Activated CD4-positive, alpha-beta memory T cell treated with anti-CD3 and anti-CD28 coated beads for 36 hours (primary cell): ENCODE measurements at regions of chr14 and their contacts with region 1.

Region 1: GRCh38 chr14:34161351-34162082 is 210.6 kb upstream of the EGLN3 start:
- DNase-seq: no peak
- H3K4me3 Mint-ChIP-seq: no peak overlapping the region
- H3K27ac Mint-ChIP-seq: no peak overlapping the region
- H3K4me1 Mint-ChIP-seq: peaks cover 7% of the 10 kb centered on the region
- H3K27me3 Mint-ChIP-seq: no peaks in the 10 kb centered on the region

Region 2: GRCh38 chr14:34147461-34147860 is 14.1 kb before region 1 on chr14:
- CTCF ChIA-PET with region 1: no interaction called
- POLR2A ChIA-PET with region 1: no interaction called
- intact Hi-C with region 1: loop called (anchors 1 kb)
- DNase-seq: no peak
- H3K4me3 Mint-ChIP-seq: no peak overlapping the region
- H3K27ac Mint-ChIP-seq: no peak overlapping the region
- H3K4me1 Mint-ChIP-seq: no peaks in the 10 kb centered on the region
- H3K27me3 Mint-ChIP-seq: peaks cover 1% of the 10 kb centered on the region